WTC11 (cell line): ENCODE measurements at regions of chr2 and their contacts with region 1.

Region 1: GRCh38 chr2:108944601-108945331 is 44.3 kb downstream of the EDAR start:
- DNase-seq: peak; percentile 58
- ATAC-seq: peak; percentile 97
- H3K4me3 Mint-ChIP-seq: no peak overlapping the region
- H3K27ac Mint-ChIP-seq: no peak overlapping the region
- H3K4me1 Mint-ChIP-seq: 0 out of 2 replicates have a peak, but pooled peaks cover 3% of the 10 kb centered on the region
- H3K27me3 Mint-ChIP-seq: peaks cover 5% of the 10 kb centered on the region
- CTCF ChIP-seq: no peak

Region 2: DNA sequence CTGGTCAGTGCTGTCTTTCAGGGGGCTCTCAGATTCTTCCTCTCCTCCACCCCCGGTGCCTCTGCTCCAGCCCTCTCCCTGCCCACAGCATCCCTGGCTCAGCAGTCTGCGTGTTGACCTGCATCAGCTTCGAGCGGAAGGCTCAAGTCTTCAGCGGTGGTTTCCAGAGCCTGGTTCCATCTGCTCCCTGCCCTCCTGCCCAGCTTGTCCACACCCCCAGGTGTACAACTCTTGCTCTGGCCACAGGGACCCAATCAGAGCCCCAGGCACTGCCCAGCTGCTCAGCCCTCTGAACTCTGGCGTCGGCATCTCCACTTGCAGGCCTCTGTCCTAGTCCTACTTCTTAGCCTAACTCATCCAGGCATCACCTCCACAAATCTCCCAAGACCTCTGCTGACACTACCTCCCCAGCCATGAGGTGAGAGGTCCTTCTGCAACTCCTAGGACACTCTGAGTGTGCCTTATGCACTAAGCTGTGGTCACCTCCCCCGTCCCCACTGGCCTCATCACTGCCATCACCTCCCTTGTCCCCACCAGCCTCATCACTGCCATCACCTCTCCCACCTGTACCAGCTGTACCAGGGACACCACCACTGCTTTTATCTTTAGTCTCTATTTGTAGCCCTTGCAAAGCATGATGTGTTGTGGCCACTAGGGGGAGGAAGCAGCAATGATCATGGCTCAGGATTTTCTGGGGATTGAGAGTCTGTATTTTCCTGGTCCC is 16.7 kb before region 1 on chr2:
- CTCF ChIA-PET with region 1: interaction called, 10 read pairs
- POLR2A ChIA-PET with region 1: no interaction called
- DNase-seq: peak; percentile 56
- ATAC-seq: peak; percentile 69
- H3K4me3 Mint-ChIP-seq: no peak overlapping the region
- H3K27ac Mint-ChIP-seq: no peak overlapping the region
- H3K4me1 Mint-ChIP-seq: peaks cover 3% of the 10 kb centered on the region
- H3K27me3 Mint-ChIP-seq: no peaks in the 10 kb centered on the region; the same call in 1 of the 2 replicates
- CTCF ChIP-seq: peak; percentile 67

Region 3: DNA sequence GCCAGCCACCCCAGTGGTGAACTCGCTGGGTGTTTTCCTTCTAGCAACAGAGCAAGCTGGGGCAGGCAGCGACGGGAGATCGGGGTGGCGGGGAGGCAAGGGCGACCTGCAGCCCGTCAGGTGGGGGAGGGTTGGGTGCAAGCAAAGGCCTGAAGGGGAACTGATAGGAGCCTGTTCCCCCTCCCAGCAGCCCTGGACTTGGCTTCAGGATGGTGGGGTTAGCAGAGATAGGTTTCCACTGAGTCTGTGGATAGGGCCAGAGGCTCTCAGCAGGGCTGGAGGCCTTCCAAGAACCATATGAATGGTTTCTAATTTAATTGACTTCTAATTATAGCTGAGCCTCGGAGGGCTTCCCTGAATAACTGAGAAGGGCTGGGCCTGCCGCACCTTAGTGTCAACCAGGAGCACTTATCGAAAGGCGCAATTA is 11.1 kb before region 1 on chr2:
- CTCF ChIA-PET with region 1: interaction called, 13 read pairs
- POLR2A ChIA-PET with region 1: no interaction called
- DNase-seq: no peak
- ATAC-seq: peak; percentile 31
- H3K4me3 Mint-ChIP-seq: no peak overlapping the region
- H3K27ac Mint-ChIP-seq: no peak overlapping the region
- H3K4me1 Mint-ChIP-seq: peaks cover 37% of the 10 kb centered on the region
- H3K27me3 Mint-ChIP-seq: no peaks in the 10 kb centered on the region; the same call in 1 of the 2 replicates
- CTCF ChIP-seq: no peak

Region 4: DNA sequence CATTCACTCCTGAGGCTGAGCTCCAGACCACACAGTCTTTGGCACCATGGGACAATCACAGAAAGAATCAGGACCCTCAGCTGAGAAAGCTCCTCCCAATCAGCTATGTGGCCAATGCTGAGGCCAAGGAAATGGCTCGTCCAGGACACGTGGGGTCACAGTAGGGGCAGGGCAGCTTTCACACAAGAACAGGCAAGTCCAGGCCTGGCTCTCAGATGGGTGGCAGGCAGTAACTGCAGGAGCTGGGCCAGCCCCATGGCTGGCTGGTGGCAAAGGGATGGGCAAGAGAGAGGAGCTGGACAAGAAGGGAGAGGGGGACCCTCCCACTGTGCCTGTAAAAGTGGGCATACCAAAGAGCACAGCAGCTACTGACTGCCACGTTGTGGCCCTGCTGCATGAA is 56.4 kb after region 1 on chr2:
- CTCF ChIA-PET with region 1: interaction called, 10 read pairs
- POLR2A ChIA-PET with region 1: no interaction called
- DNase-seq: no peak
- ATAC-seq: no peak
- H3K4me3 Mint-ChIP-seq: no peak overlapping the region
- H3K27ac Mint-ChIP-seq: no peak overlapping the region
- H3K4me1 Mint-ChIP-seq: peaks cover 8% of the 10 kb centered on the region; the same call in 1 of the 2 replicates
- H3K27me3 Mint-ChIP-seq: no peaks in the 10 kb centered on the region
- CTCF ChIP-seq: no peak